Lower leg skin (tissue), 4 donors: ENCODE measurements at regions of chr3 and their contacts with region 1.

Region 1: DNA sequence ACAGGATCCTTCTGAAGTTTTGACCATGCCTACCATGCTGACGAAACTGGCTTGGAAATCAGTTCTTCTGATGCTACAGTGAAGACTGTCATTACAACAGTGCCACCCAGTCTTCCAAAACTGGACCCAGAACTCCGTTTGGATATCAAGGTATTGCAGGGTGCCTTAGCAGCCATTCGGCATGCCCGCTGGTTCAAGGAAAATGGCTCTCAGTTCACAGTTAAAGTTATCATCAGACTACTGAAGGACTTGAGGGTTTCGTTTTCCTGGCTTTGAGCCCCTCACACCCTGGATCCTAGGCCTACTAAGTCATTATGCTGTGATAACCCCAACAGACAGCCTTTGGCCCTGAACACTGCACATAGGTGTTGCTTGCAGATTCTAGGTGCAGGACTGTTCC is 351.0 kb downstream of the MAGI1 start:
- DNase-seq: no peak
- H3K4me3 ChIP-seq: no peak overlapping the region
- CTCF ChIP-seq: no peak
- POLR2A ChIP-seq: no peak

Region 2: GRCh38 chr3:65706776-65707568 is 19.2 kb after region 1 on chr3:
- intact Hi-C with region 1: no loop called
- DNase-seq: no peak
- H3K4me3 ChIP-seq: no peak overlapping the region
- CTCF ChIP-seq: no peak
- POLR2A ChIP-seq: no peak

Region 3: GRCh38 chr3:65720989-65721737 is 33.4 kb after region 1 on chr3:
- intact Hi-C with region 1: loop called (anchors 1 kb)
- DNase-seq: no peak
- H3K4me3 ChIP-seq: no peak overlapping the region
- CTCF ChIP-seq: no peak
- POLR2A ChIP-seq: no peak

Region 4: DNA sequence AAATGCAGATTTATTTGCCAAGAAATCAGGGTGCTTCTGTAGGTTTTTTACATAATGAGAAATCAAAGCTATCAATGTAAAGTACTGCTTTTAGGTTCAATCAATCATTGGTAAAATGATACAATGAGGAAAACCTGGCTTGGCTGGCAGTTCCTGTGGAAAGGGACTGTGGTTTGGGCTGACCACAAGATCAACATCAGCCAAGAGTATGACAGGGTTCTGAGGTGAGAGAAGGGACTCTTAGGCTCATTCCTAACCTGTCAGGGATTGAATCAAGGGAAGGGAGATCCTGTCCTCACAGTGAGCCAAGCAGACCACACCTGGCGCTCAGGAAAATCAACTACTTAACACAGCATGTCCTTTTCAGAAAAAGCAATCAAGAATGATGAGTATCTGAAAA is 239.8 kb after region 1 on chr3:
- intact Hi-C with region 1: no loop called
- DNase-seq: no peak
- H3K4me3 ChIP-seq: no peak overlapping the region
- CTCF ChIP-seq: no peak
- POLR2A ChIP-seq: no peak